CD4-positive, alpha-beta memory T cell (primary cell): ENCODE measurements at regions of chr17 and their contacts with region 1.

Region 1: GRCh38 chr17:64599187-64599676 is 62.9 kb downstream of the SMURF2 start:
- DNase-seq: peak; percentile 40 to 77 (median 51)
- H3K4me3 ChIP-seq: no peak overlapping the region
- H3K4me3 Mint-ChIP-seq: peak overlapping the region; percentile 43 to 86 (median 76)
- H3K27ac ChIP-seq: peak overlapping the region; percentile 28
- H3K27ac Mint-ChIP-seq: peak overlapping the region; percentile 58 to 93 (median 87)
- H3K4me1 ChIP-seq: peaks cover 22% of the 10 kb centered on the region
- H3K4me1 Mint-ChIP-seq: peaks cover 18 to 39% (median 33%) of the 10 kb centered on the region in 4 donors
- H3K27me3 ChIP-seq: no peaks in the 10 kb centered on the region
- H3K27me3 Mint-ChIP-seq: no peaks in the 10 kb centered on the region

Region 2: DNA sequence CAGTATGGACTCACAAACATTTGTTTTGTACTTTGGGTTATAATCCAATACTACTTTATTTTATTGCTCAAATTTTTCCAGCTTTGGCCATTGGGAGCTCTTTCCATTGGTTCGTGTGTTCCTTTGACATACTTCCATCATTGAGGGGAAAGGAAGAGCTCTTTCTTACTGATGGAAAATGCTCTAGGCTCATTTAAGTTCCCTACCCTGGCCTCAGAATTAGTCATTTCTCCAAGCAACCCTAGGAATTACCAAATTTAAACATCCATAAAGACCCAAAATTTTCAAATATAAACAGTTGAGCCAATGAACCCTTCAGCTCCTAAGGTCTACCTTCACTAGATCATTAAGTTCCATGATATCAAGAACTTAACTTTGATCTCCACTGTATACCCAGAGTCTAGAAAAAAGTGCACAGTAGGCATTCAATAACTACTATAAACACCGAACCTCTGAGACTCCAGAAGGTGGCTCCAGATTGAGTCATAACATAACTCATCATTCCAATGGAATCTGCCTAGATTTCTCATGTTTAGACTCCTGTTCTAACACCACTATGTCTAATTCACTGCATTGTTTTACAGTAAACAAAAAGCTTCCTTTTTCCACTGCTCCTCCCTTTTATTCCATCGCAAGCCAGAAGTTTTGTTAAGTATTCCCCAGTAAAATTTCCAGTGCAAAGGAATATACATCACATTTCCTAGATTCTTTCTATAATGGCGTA is 23.9 kb after region 1 on chr17:
- CTCF ChIA-PET with region 1: no interaction called
- POLR2A ChIA-PET with region 1: no interaction called
- intact Hi-C with region 1: no loop called
- DNase-seq: no peak
- H3K4me3 ChIP-seq: no peak overlapping the region
- H3K4me3 Mint-ChIP-seq: no peak overlapping the region
- H3K27ac ChIP-seq: no peak overlapping the region
- H3K27ac Mint-ChIP-seq: peak overlapping the region in 1 of 7 donors; percentile 13
- H3K4me1 ChIP-seq: peaks cover 22% of the 10 kb centered on the region
- H3K4me1 Mint-ChIP-seq: peaks cover 20 to 43% (median 32%) of the 10 kb centered on the region in 4 donors
- H3K27me3 ChIP-seq: no peaks in the 10 kb centered on the region
- H3K27me3 Mint-ChIP-seq: no peaks in the 10 kb centered on the region

Region 3: DNA sequence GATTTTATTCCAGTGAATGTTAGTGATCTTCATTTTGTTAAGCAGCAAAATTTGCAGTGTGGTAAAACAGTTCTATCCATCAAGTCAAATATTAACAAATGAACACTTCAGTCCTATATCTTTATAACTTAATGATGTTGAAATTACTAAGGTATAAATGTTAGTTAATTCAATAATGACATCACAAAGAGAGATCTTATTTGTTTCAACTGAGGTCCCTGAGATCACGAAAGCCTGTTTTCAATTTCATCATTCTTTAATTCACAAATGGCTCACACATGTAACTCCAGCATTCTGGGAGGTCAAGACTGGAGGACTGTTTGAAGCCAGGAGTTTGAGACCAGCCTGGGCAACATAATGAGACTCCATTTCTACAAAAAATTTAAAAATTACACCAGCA is 49.0 kb after region 1 on chr17:
- CTCF ChIA-PET with region 1: no interaction called
- POLR2A ChIA-PET with region 1: no interaction called
- intact Hi-C with region 1: loop called (anchors 2 kb)
- DNase-seq: no peak
- H3K4me3 ChIP-seq: no peak overlapping the region
- H3K4me3 Mint-ChIP-seq: no peak overlapping the region
- H3K27ac ChIP-seq: no peak overlapping the region
- H3K27ac Mint-ChIP-seq: peak overlapping the region in 1 of 7 donors; percentile 77
- H3K4me1 ChIP-seq: peaks cover 12% of the 10 kb centered on the region
- H3K4me1 Mint-ChIP-seq: peaks cover 12 to 38% (median 27%) of the 10 kb centered on the region in 4 donors
- H3K27me3 ChIP-seq: no peaks in the 10 kb centered on the region
- H3K27me3 Mint-ChIP-seq: no peaks in the 10 kb centered on the region